CD8-positive, alpha-beta memory T cell (primary cell): ENCODE measurements at regions of chr5 and their contacts with region 1.

Region 1: DNA sequence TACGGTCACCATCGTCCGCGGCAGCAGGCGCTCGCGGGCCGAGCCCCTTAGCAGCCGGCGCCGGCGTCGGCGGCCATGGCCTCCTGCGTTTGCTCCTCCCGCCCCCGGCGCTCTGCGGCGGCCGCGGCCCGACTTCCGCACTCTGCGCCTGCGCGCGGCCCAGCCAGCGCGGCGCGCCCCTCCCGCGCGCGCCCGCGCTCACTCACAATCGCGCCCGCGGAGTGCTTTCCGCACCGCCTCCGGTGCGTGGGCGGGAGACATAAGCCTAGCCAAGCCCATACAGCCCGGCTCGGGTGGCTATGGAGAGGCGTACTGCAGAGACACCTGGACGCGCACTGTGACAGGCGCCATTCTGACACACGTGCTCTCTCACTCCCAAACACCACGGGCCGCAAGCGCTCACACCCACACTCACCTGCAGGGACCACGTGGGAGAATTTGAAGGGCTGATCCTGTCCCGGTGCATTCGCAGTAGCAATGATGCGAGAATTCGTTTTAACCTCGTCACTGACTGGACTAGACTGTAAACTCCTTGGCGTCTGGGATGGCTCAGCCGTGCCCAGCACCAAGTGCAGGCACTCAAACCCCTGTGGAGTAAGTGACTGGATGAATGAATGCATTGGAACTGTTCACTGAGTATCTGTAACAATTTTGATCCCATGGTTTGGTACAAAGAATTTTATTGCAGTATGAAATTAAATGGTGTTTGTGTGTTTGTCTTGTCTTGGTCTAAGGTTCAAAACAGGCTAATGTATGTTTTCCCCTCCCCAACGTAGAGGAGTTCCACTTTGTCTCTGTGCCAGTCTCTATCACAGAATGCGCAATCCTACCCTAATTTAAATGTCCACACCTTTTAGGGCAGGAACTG is at the start of gene RNF145:
- DNase-seq: peak; percentile 86 to 95 (median 92)
- H3K4me3 ChIP-seq: peak within 1 kb of the TSS; percentile 88
- H3K4me3 Mint-ChIP-seq: peak within 1 kb of the TSS; percentile 96 to 99 (median 96)
- H3K27ac ChIP-seq: peak within 1 kb of the TSS; percentile 87
- H3K27ac Mint-ChIP-seq: peak within 1 kb of the TSS; percentile 96 to 98 (median 98)
- H3K4me1 ChIP-seq: peaks cover 40% of the 10 kb centered on the region
- H3K4me1 Mint-ChIP-seq: peaks cover 42 to 50% (median 49%) of the 10 kb centered on the region in 3 donors
- H3K27me3 ChIP-seq: no peaks in the 10 kb centered on the region
- H3K27me3 Mint-ChIP-seq: peaks cover 6 to 9% of the 10 kb centered on the region in 2 donors
- total RNA-seq, gene RNF145: 80.0 to 85.0 TPM

Region 2: DNA sequence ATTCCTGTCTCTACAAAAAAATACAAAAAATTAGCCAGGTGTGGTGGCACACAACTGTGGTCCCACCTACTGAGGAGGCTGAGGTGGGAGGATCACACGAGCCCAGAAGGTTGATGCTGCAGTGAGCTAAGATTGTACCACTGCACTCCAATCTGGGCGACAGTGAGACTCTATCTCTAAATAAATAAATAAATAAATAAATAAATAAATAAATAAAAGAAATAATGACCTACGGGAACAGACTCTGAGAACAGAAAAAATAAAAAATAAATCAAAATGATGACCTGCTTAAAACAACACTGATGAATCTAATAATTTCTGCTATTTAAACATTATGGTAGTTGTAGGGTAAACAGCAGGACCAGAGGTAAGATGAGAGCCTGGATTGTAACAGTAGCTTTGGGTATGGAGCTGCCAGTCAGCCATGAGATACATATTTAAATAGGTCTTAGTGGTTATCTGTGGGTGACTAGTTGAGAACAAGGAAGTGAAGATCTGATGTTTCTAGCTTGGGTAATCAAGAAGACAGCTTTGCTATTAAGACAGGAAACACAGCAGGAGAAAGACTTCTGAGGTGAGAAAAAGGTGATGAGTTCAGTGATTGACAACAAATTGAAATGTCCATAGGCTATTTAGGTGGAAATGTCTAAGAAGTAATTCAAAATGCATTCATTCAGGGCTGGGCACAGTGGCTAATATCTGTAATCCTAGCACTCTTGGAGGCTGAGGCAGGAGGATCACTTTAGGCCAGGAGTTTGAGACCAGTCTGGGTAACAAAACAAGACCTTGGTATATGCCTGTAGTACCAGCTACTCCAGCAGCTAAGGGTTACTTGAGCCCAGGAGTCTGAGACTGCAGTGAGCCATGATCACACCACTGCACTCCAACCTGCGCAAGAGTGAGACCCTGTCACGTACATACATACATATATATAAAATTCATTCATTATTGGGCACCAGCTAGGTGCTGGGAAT is 11.3 kb before region 1 on chr5:
- CTCF ChIA-PET with region 1: interaction called, 6 read pairs
- POLR2A ChIA-PET with region 1: interaction called, 15 read pairs
- DNase-seq: peak in 1 of 5 donors; percentile 30
- H3K4me3 ChIP-seq: no peak overlapping the region
- H3K4me3 Mint-ChIP-seq: peak overlapping the region in 6 of 7 donors; percentile 0 to 60 (median 10)
- H3K27ac ChIP-seq: no peak overlapping the region
- H3K27ac Mint-ChIP-seq: peak overlapping the region; percentile 21 to 90 (median 42)
- H3K4me1 ChIP-seq: peaks cover 54% of the 10 kb centered on the region
- H3K4me1 Mint-ChIP-seq: peaks cover 61 to 82% (median 78%) of the 10 kb centered on the region in 3 donors
- H3K27me3 ChIP-seq: no peaks in the 10 kb centered on the region
- H3K27me3 Mint-ChIP-seq: no peaks in the 10 kb centered on the region